Activated CD4-positive, alpha-beta T cell treated with anti-CD3 and anti-CD28 coated beads, Interleukin-2, amount 10 ng/mL, durations not matched to agents 24 days and 14 days (primary cell): ENCODE measurements at regions of chr6 and their contacts with region 1.

Region 1: GRCh38 chr6:26216356-26216885 is 129.2 kb downstream of the HFE start:
- DNase-seq: peak; percentile 96
- H3K4me3 Mint-ChIP-seq: no peak overlapping the region
- H3K27ac Mint-ChIP-seq: no peak overlapping the region
- H3K4me1 Mint-ChIP-seq: peaks cover 27% of the 10 kb centered on the region
- H3K27me3 Mint-ChIP-seq: no peaks in the 10 kb centered on the region

Region 2: GRCh38 chr6:25670793-25671513 is 545.5 kb before region 1 on chr6:
- intact Hi-C with region 1: no loop called
- DNase-seq: no peak
- H3K4me3 Mint-ChIP-seq: no peak overlapping the region
- H3K27ac Mint-ChIP-seq: no peak overlapping the region
- H3K4me1 Mint-ChIP-seq: no peaks in the 10 kb centered on the region
- H3K27me3 Mint-ChIP-seq: peaks cover 15% of the 10 kb centered on the region

Region 3: DNA sequence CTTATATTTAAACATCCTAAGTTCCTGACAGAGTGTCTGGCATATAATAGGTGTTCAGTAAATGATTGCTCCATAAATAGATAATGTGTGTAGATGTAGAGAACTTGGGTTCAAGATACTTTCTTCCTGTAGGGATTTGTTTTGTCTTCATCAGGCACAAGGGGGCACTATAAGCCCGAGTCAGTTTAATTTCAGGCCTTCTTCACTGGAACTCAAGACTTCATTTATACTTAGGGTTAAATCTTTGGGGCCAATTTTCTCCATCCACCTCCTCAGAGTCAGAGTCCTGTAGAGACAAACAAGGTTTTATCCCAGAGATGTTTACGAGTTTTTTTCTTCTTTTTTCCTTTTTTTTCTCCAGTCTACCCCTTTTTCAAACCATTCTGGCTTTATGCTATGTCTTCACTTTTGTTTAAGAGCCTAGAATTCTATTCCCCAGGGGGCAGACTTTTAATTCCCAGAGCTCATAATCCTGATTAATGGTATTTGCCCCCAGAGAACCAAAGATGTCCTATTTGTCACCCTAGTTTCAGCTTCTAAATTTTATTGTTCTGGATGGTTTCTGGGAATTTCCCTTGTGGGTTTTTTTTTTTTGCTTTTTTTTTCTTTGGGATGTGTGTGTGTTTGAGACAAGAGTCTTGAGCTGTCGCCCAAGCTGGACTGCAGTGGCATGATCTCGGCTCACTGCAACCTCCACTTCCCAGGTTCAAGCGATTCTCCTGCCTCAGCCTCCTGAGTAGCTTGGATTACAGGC is 40.8 kb before region 1 on chr6:
- intact Hi-C with region 1: loop called (anchors 1 kb)
- DNase-seq: peak; percentile 91
- H3K4me3 Mint-ChIP-seq: peak overlapping the region; percentile 40
- H3K27ac Mint-ChIP-seq: peak overlapping the region; percentile 63
- H3K4me1 Mint-ChIP-seq: peaks cover 45% of the 10 kb centered on the region
- H3K27me3 Mint-ChIP-seq: no peaks in the 10 kb centered on the region

Region 4: DNA sequence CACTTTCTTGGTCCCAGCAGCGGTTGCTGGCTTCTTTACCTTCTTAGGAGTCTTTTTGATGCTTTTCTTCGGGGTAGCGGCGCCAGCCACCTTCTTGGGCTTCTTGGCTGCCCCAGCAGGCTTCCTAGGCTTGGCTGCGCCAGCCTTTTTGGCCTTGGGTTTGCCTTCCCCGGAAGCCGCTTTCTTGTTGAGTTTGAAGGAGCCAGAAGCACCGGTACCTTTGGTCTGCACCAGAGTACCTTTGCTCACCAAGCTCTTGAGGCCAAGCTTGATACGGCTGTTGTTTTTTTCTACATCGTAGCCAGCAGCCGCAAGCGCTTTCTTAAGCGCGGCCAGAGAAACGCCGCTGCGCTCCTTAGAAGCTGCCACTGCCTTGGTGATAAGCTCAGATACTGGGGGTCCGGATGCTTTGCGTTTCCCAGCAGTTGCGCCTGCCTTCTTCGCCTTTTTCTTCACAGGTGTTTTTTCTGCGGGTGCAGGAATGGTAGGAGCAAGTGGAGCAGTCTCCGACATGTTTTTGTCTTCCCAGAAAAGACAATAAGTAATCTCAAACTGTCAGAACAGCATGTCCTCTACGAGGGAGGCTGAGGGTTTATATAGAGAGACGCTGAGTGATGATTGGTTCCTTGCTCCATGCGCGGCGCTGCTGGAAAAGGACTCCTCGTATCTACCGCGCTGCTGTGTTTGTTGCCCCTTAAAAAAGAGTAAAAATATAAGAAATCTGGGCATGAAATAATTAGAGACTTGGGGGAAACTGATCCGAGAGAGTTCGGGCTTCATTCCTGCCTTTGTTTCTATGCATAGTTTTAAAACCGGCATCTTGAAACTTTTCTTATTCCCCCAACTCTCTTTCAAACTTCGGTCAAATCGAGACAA is 18.2 kb after region 1 on chr6:
- intact Hi-C with region 1: loop called (anchors 1 kb)
- DNase-seq: peak; percentile 95
- H3K4me3 Mint-ChIP-seq: peak overlapping the region; percentile 82
- H3K27ac Mint-ChIP-seq: peak overlapping the region; percentile 97
- H3K4me1 Mint-ChIP-seq: peaks cover 39% of the 10 kb centered on the region
- H3K27me3 Mint-ChIP-seq: no peaks in the 10 kb centered on the region

Region 5: GRCh38 chr6:26249957-26250697 is 33.7 kb after region 1 on chr6:
- intact Hi-C with region 1: loop called (anchors 2 kb)
- DNase-seq: peak; percentile 92
- H3K4me3 Mint-ChIP-seq: peak overlapping the region; percentile 95
- H3K27ac Mint-ChIP-seq: peak overlapping the region; percentile 95
- H3K4me1 Mint-ChIP-seq: peaks cover 37% of the 10 kb centered on the region
- H3K27me3 Mint-ChIP-seq: no peaks in the 10 kb centered on the region